Sigmoid colon (tissue), 7 donors: ENCODE measurements at regions of chr17 and their contacts with region 1.

Region 1: DNA sequence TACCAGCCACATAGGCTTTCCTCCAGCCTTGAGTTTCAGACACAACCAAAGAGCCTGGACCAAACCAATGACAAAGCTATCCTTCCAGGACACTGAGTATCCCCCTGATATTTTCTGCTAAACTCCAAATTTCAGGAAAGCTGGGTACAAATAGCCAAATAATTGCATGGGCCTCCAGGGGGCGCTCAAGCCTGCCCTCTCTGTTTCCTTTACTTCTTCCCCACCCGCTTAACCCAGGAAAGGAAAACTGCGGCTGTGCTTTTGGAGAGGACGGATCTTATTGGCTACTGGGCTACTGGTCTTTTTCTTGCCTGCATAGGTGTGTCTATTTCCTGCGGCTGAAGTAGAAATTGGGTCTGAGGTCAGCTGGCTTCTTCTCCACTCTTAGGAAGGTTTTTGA is 30.1 kb downstream of the GNGT2 start:
- DNase-seq: peak; percentile 73
- H3K4me3 ChIP-seq: no peak overlapping the region
- H3K27ac ChIP-seq: no peak overlapping the region
- H3K4me1 ChIP-seq: no peaks in the 10 kb centered on the region
- H3K27me3 ChIP-seq: no peaks in the 10 kb centered on the region
- CTCF ChIP-seq: peak; percentile 39 to 65 (median 54)
- EP300 ChIP-seq: no peak
- POLR2A ChIP-seq: no peak

Region 2: DNA sequence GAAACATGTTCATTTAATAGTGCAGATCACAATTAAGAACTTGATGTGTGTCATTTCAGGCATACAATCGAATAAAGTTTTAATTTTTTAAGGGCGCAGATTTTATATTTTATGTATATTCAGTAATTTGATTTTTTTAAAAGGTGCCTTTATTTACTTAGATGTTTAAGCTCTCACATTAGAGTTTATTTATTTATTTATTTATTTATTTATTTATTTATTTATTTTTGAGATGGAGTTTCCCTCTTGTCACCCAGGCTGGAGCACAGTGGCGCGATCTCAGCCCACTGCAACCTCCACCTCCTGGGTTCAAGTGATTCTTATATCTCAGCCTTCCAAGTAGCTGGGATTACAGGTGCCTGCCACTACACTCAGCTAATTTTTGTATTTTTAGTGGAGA is 44.0 kb before region 1 on chr17:
- intact Hi-C with region 1: no loop called
- DNase-seq: no peak
- H3K4me3 ChIP-seq: no peak overlapping the region
- H3K27ac ChIP-seq: no peak overlapping the region
- H3K4me1 ChIP-seq: peaks cover 0 to 12% (median 10%) of the 10 kb centered on the region in 4 donors
- H3K27me3 ChIP-seq: peaks cover 26 to 48% (median 32%) of the 10 kb centered on the region in 3 donors
- CTCF ChIP-seq: no peak
- EP300 ChIP-seq: no peak
- POLR2A ChIP-seq: no peak

Region 3: DNA sequence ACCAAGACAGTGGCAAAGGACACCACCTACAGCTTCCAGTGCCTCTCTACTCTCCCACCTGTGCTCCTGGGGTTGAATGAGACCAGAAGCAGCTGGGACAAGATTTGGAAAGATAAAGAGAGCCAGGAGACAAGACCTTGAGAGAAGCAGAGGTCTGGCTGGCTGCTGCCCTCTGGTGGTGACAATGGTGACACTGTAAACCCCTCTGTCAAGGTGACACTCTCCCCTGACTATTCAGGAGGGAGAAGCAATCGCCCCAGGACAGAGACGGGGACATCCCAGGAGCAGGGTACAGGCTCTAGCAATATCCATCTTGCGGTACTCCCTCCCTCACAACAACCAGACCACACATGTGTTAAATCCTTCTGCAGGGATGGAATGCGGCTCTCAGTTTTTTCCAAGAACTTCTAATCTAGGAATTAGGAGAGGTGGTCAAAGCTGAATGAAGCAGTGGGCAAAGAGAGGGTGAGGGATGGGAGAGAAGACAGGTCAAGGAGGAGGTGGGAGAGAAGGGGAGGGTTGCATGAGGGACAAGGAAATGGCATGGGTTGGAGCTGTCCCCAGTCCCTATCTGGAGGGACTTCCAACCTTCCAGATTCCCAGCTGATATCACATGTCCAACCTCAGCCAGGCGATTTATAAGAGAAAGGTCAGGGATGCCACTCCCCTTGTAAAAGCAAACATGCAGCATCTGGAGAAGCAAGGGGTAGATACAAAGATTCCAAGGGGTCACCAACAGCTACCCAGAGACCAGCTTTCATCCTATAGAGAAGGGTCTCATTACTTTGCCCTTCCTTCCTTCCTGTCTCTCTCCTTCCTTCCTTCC is 47.3 kb after region 1 on chr17:
- intact Hi-C with region 1: loop called (anchors 2 kb)
- DNase-seq: peak; percentile 87
- H3K4me3 ChIP-seq: no peak overlapping the region
- H3K27ac ChIP-seq: no peak overlapping the region
- H3K4me1 ChIP-seq: peaks cover 0 to 38% (median 34%) of the 10 kb centered on the region in 4 donors
- H3K27me3 ChIP-seq: peaks cover 20 to 55% (median 43%) of the 10 kb centered on the region in 3 donors
- CTCF ChIP-seq: peak; percentile 45 to 71 (median 69)
- EP300 ChIP-seq: no peak
- POLR2A ChIP-seq: no peak